PC-9 (cell line): ENCODE measurements at regions of chr5 and their contacts with region 1.

Region 1: DNA sequence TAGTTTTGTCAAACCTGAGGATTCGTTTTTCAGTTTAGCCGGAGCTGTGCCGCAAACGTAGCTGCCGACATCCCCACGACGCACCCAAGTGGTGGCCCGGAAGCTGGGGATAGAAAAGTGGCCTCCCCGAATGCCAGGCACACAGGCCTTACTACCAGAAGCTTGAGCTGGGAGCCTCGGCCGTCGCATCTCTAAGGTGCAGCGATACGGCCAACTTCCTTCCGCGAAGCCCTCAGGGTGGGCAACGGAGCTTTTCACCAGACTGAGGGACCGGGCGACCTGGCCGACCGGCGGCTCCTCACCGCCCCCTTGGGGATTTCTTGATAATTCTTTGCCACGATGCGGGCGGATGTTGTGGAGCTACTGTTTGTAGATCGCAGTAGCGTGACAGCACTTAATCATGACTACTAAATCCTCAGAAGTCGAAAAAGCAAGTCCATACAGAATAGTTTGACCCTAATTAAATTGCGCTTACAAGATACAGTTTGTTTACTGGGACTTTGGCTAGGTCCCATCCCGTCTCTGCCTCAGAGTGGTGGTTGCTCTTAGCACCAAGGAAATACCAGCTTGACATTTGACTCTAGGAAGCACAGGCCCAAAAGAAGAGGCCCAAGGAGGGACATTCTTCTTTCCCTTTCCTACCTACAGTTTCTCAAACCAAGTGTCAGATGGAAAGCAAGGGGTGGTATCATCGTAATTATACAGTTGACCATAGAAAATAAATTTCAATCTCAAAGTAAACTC is 613 bp upstream of the TMEM267 start:
- DNase-seq: peak; percentile 85 to 95
- H3K4me3 ChIP-seq: peak overlapping the region; percentile 69
- H3K27ac ChIP-seq: peak overlapping the region; percentile 86
- H3K4me1 ChIP-seq: peaks cover 21% of the 10 kb centered on the region
- H3K27me3 ChIP-seq: no peaks in the 10 kb centered on the region
- CTCF ChIP-seq: peak; percentile 97

Region 2: DNA sequence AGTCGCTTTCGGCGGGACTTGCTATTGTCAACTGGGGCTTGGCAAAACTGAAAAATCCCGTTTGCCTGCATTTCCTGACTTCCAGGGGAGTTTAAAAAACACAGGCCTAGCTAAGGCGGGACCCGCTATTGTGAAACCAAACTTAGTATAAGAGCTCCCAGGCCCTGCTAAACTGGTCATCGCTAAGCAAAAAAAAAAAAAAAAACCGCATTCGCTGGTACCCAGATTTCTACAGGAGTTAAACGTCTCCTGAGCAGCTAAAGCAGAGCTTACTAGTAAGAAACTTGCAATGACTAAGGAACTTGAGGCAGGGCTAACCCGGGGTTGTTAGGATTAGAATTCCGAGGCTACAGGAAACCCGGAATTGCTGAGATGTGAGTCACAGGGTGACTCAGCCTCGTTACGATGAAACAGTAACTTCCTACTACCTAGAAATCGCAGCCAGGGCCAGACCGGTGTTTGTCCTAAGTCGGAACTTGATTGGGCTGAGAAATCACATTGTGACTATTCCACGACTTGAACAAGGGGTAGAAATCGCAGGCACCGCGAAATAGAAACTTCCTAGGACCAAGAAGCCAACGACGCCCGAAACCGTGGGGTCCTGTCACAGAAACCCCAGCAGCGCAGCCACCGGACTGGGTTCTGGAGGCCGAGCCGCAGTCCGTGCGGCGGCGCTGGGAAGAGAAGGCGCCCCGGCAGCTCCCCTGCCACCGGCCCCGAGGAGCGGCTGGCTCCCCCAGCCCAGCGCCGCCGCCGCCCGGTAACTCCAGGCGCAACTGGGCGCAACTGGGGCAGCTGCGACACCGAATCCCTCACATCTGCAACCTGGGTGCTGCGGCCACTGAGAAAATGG is 533.6 kb before region 1 on chr5:
- CTCF ChIA-PET with region 1: interaction called, 6 read pairs
- POLR2A ChIA-PET with region 1: interaction called, 17 read pairs
- intact Hi-C with region 1: no loop called
- DNase-seq: peak; percentile 97 to 100
- H3K4me3 ChIP-seq: peak overlapping the region; percentile 55
- H3K27ac ChIP-seq: peak overlapping the region; percentile 96
- H3K4me1 ChIP-seq: peaks cover 28% of the 10 kb centered on the region
- H3K27me3 ChIP-seq: no peaks in the 10 kb centered on the region
- CTCF ChIP-seq: no peak

Region 3: DNA sequence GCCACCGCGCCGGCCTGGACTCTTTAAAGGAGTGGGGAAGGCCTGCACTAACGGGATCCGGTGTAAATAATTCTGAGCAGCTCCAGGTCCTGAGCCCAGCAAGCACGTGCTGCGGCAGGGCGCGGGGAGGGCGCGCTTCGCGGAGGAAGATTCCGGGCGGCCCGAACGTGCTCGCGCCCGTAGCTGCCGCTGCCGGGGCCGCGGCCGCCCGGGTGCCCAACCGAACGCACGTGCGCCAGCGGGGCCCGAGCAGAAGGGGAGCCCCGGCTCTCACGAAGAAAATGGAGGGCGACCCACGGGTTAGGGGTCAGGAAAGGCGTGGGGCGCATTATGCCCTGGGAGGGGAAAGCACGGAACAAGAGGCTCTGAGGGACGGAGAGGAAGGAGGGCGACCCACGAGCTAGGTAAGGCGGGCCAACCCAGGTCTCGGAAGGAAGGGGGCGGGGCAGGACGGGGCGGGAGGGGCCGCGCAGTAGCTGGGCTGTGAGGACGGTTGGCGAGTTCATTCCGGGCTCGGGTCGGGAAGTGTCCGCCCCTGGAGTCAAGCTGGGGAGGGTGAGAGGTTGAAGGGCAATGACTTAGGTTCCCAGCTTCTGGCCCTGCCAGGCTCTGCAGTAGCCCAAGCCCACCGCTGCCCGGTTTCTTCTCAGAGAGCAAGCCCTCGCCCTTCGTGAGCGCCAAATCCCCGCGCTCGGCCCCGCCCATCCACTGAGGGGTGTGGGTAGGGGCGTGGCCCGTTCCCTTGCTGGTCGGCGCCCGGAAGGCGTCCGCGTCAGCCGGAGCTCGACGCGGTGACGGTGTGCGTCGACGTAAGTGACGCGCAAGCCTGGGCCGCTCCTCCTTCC is 363.3 kb before region 1 on chr5 and contains the start of gene ZNF131:
- CTCF ChIA-PET with region 1: interaction called, 9 read pairs
- POLR2A ChIA-PET with region 1: interaction called, 51 read pairs
- intact Hi-C with region 1: loop called (anchors 1 kb)
- DNase-seq: peak; percentile 95 to 100
- H3K4me3 ChIP-seq: peak within 1 kb of the TSS; percentile 73
- H3K27ac ChIP-seq: peak within 1 kb of the TSS; percentile 91
- H3K4me1 ChIP-seq: peaks cover 31% of the 10 kb centered on the region
- H3K27me3 ChIP-seq: no peaks in the 10 kb centered on the region
- CTCF ChIP-seq: no peak
- total RNA-seq, gene ZNF131: 79.5 and 82.4 TPM in 2 replicates

Region 4: GRCh38 chr5:43313035-43313853 is 171.0 kb before region 1 on chr5 and contains the start of gene HMGCS1:
- CTCF ChIA-PET with region 1: interaction called, 35 read pairs
- POLR2A ChIA-PET with region 1: interaction called, 42 read pairs
- intact Hi-C with region 1: loop called (anchors 1 kb)
- DNase-seq: peak; percentile 100
- H3K4me3 ChIP-seq: peak within 1 kb of the TSS; percentile 72
- H3K27ac ChIP-seq: peak within 1 kb of the TSS; percentile 73
- H3K4me1 ChIP-seq: peaks cover 66% of the 10 kb centered on the region
- H3K27me3 ChIP-seq: no peaks in the 10 kb centered on the region
- CTCF ChIP-seq: peak; percentile 24; the same call in 1 of the 2 replicates
- total RNA-seq, gene HMGCS1: 152 and 189 TPM in 2 replicates

Region 5: DNA sequence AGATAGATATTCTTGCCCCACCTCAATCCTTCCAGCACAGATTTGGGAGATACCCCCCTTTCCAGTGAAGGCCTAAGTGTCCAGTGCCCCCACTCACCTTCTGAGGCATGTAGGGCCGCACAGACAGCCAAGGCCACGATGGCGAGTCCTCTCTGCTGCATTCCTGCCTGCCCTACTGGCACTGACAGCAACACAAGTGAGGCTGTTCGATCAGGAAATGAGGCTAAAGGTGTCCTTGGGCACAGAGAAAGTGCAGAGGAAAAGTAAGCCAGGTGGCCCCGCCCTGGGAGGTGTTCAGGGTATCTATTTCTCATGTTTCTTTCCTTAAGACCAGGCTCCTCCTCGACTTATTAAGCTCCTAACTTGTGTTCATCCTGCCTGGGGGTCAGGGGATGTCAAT is 72.1 kb before region 1 on chr5 and contains the start of gene CCL28:
- CTCF ChIA-PET with region 1: interaction called, 11 read pairs
- POLR2A ChIA-PET with region 1: no interaction called
- intact Hi-C with region 1: no loop called
- DNase-seq: no peak
- H3K4me3 ChIP-seq: no peak within 1 kb of the TSS
- H3K27ac ChIP-seq: no peak within 1 kb of the TSS
- H3K4me1 ChIP-seq: peaks cover 28% of the 10 kb centered on the region
- H3K27me3 ChIP-seq: no peaks in the 10 kb centered on the region
- CTCF ChIP-seq: no peak
- total RNA-seq, gene CCL28: 2.2 and 4.3 TPM in 2 replicates

Region 6: GRCh38 chr5:43453606-43454005 is 30.7 kb before region 1 on chr5:
- CTCF ChIA-PET with region 1: interaction called, 12 read pairs
- POLR2A ChIA-PET with region 1: interaction called, 4 read pairs
- intact Hi-C with region 1: no loop called
- DNase-seq: peak in 1 of 2 experiments; percentile 25
- H3K4me3 ChIP-seq: no peak overlapping the region
- H3K27ac ChIP-seq: no peak overlapping the region
- H3K4me1 ChIP-seq: no peaks in the 10 kb centered on the region
- H3K27me3 ChIP-seq: no peaks in the 10 kb centered on the region
- CTCF ChIP-seq: no peak

Region 7: GRCh38 chr5:43609752-43610151 is 125.5 kb after region 1 on chr5:
- CTCF ChIA-PET with region 1: interaction called, 16 read pairs
- POLR2A ChIA-PET with region 1: no interaction called
- intact Hi-C with region 1: no loop called
- DNase-seq: no peak
- H3K4me3 ChIP-seq: no peak overlapping the region
- H3K27ac ChIP-seq: no peak overlapping the region
- H3K4me1 ChIP-seq: no peaks in the 10 kb centered on the region
- H3K27me3 ChIP-seq: no peaks in the 10 kb centered on the region
- CTCF ChIP-seq: peak; percentile 64